Caco-2 (cell line): ENCODE measurements at regions of chr12 and their contacts with region 1.

Region 1: DNA sequence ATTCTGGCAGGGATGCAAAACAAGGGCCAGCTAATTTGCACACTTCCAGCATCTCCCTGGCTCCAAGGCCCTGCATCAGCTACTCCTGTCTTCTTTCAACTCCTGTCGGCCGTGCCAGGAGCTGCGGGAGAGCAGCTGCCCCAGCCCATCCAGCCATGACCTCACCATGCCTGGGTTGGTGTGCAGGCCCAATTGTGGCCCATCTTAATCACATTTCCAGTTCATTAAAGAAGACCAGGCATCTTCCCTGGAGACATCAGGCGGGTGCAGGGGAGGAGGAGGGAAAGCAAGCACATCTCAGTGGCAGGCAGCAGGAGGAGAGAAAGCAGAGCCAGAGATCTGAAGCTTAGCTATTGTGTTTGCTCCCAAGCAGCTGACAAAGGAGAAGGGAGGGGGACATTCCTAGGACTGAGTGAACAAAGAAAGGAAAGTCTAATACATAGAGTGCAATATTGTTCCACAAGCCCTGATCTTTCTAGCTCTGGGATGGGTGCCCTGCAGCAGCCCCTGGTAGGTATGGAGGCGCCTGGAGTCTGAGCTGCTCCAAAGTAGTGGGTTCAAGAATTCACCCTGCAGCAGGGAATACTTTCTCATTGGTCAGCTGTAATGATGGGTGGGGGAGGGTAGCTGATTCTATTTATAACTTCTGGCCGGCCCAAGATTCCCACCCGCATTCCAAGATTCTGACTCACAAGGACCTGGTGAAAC is 40.1 kb downstream of the VWF start:
- DNase-seq: peak; percentile 84 to 93
- H3K4me3 ChIP-seq: no peak overlapping the region
- H3K4me3 Mint-ChIP-seq: peak overlapping the region; percentile 44
- H3K27ac Mint-ChIP-seq: peak overlapping the region; percentile 92
- H3K4me1 ChIP-seq: peaks cover 59% of the 10 kb centered on the region
- H3K4me1 Mint-ChIP-seq: peaks cover 34% of the 10 kb centered on the region
- H3K27me3 ChIP-seq: no peaks in the 10 kb centered on the region
- H3K27me3 Mint-ChIP-seq: no peaks in the 10 kb centered on the region
- CTCF ChIP-seq: no peak

Region 2: DNA sequence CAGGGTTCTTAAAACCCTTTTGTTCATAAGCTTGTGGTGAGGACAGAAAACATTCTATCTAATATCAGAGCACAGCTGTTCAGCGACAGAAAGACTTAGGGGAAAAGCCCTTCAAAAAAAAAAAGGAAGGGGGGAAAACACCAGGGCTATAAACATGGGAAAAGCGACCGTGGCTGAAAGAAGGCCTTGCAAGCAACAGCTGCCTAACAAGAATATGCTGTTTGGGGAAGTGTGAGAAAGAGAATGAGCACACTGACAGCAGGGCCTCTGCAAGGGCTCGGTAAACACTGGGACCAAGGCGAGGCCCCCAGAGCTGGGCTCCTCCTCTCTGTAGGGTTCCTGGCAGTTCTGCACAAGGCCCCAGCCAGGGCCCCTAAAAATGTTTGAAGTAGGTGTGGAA is 1838.3 kb before region 1 on chr12:
- CTCF ChIA-PET with region 1: no interaction called
- POLR2A ChIA-PET with region 1: interaction called, 14 read pairs
- intact Hi-C with region 1: no loop called
- DNase-seq: peak in 1 of 2 experiments; percentile 26
- H3K4me3 ChIP-seq: no peak overlapping the region
- H3K4me3 Mint-ChIP-seq: no peak overlapping the region
- H3K27ac Mint-ChIP-seq: no peak overlapping the region
- H3K4me1 ChIP-seq: no peaks in the 10 kb centered on the region
- H3K4me1 Mint-ChIP-seq: no peaks in the 10 kb centered on the region
- H3K27me3 ChIP-seq: 0 out of 2 replicates have a peak, but pooled peaks cover 1% of the 10 kb centered on the region
- H3K27me3 Mint-ChIP-seq: peaks cover 32% of the 10 kb centered on the region
- CTCF ChIP-seq: no peak

Region 3: DNA sequence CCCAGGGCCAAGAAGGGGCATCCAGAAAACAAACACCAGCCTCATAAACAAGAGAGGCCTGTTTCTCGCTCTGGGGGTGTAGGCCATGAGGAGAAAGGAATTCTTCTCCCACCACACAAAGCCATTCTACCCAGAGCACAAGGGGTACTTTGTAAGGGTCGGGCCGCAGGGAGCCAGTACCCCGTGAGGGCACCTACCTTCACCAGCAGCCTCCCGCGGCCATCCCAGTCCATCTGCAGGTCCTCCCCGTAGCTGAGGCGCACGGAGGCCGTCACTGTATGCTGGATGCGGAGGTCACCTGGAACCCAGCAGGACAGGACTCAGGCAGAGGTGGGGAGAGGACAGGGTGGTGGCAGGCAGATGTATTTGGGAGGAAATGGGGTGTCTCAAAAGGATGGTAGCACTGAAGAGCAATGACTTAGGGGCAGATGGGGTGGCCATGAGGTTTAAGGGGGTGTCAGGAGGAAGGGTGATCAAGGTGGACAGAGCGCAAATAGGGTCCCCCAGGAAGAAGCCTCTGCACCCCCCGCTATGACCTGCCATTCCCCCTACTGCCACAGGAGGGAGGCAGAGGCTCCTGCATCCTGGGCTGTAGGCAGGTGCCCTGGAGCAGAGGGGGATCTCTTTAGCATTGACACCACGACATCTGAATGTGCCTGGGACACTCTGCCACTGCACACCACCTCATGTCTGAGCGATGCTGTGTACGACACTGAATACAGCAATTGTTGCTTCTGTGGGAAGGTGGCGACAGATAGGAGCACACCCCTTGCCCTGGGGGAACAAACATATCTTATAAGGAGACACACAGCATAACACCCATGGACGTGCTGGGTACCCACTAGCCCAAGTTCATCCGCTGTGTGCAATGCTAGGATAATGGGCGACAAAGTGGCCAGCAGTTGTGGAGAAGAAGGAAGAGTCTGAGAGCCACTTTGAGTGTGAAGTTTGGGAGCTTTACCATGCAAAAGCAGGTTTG is 21.4 kb before region 1 on chr12:
- CTCF ChIA-PET with region 1: interaction called, 10 read pairs
- POLR2A ChIA-PET with region 1: no interaction called
- intact Hi-C with region 1: no loop called
- DNase-seq: peak; percentile 79 to 85
- H3K4me3 ChIP-seq: no peak overlapping the region
- H3K4me3 Mint-ChIP-seq: no peak overlapping the region
- H3K27ac Mint-ChIP-seq: no peak overlapping the region
- H3K4me1 ChIP-seq: peaks cover 16% of the 10 kb centered on the region
- H3K4me1 Mint-ChIP-seq: peaks cover 39% of the 10 kb centered on the region
- H3K27me3 ChIP-seq: no peaks in the 10 kb centered on the region
- H3K27me3 Mint-ChIP-seq: no peaks in the 10 kb centered on the region
- CTCF ChIP-seq: peak; percentile 99 to 100

Region 4: DNA sequence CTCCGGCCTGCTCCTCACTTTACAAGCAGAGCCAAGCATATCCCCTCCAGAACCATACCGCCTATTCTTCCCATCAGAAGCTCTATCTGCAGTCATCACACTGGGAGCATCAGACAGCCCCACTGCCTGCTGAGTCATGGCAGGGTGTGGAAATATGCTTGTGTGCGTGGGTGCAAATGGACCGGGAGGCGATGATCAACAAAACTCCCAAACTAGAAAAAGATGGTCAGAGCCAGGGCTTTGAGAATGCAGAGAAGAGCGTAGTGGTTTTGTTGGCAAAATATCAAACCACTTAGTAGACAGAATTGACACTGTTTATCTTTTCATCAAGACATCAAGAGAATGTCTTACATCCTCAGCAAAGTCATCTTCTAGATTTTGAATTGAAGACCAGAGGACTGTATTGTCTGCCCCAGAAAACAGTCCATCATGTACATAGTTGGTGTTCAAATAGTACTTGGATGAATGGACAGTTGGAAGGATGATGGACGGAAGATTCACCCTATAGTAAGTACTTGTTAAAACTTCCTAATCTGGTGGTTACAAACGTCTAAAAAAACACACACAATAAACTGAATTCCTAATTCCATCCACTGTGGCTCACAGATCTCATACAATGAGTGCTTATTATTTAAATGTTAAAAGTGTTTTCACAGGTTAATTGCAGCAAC is 14.8 kb before region 1 on chr12:
- CTCF ChIA-PET with region 1: interaction called, 28 read pairs
- POLR2A ChIA-PET with region 1: interaction called, 16 read pairs
- intact Hi-C with region 1: loop called (anchors 1 kb)
- DNase-seq: no peak
- H3K4me3 ChIP-seq: no peak overlapping the region
- H3K4me3 Mint-ChIP-seq: no peak overlapping the region
- H3K27ac Mint-ChIP-seq: no peak overlapping the region
- H3K4me1 ChIP-seq: peaks cover 41% of the 10 kb centered on the region
- H3K4me1 Mint-ChIP-seq: peaks cover 59% of the 10 kb centered on the region
- H3K27me3 ChIP-seq: no peaks in the 10 kb centered on the region
- H3K27me3 Mint-ChIP-seq: no peaks in the 10 kb centered on the region
- CTCF ChIP-seq: no peak

Region 5: GRCh38 chr12:6182116-6182898 is 97.9 kb after region 1 on chr12:
- CTCF ChIA-PET with region 1: no interaction called
- POLR2A ChIA-PET with region 1: no interaction called
- intact Hi-C with region 1: loop called (anchors 5 kb)
- DNase-seq: peak; percentile 59 to 91
- H3K4me3 ChIP-seq: no peak overlapping the region
- H3K4me3 Mint-ChIP-seq: no peak overlapping the region
- H3K27ac Mint-ChIP-seq: no peak overlapping the region
- H3K4me1 ChIP-seq: peaks cover 40% of the 10 kb centered on the region
- H3K4me1 Mint-ChIP-seq: peaks cover 8% of the 10 kb centered on the region
- H3K27me3 ChIP-seq: no peaks in the 10 kb centered on the region
- H3K27me3 Mint-ChIP-seq: no peaks in the 10 kb centered on the region
- CTCF ChIP-seq: no peak

Region 6: GRCh38 chr12:6551496-6552139 is 467.2 kb after region 1 on chr12:
- CTCF ChIA-PET with region 1: no interaction called
- POLR2A ChIA-PET with region 1: no interaction called
- intact Hi-C with region 1: no loop called
- DNase-seq: no peak
- H3K4me3 ChIP-seq: no peak overlapping the region
- H3K4me3 Mint-ChIP-seq: no peak overlapping the region
- H3K27ac Mint-ChIP-seq: peak overlapping the region; percentile 18
- H3K4me1 ChIP-seq: peaks cover 20% of the 10 kb centered on the region
- H3K4me1 Mint-ChIP-seq: peaks cover 16% of the 10 kb centered on the region
- H3K27me3 ChIP-seq: no peaks in the 10 kb centered on the region
- H3K27me3 Mint-ChIP-seq: no peaks in the 10 kb centered on the region
- CTCF ChIP-seq: no peak